Esophagus squamous epithelium (tissue), 5 donors: ENCODE measurements at regions of chr14 and their contacts with region 1.

Region 1: DNA sequence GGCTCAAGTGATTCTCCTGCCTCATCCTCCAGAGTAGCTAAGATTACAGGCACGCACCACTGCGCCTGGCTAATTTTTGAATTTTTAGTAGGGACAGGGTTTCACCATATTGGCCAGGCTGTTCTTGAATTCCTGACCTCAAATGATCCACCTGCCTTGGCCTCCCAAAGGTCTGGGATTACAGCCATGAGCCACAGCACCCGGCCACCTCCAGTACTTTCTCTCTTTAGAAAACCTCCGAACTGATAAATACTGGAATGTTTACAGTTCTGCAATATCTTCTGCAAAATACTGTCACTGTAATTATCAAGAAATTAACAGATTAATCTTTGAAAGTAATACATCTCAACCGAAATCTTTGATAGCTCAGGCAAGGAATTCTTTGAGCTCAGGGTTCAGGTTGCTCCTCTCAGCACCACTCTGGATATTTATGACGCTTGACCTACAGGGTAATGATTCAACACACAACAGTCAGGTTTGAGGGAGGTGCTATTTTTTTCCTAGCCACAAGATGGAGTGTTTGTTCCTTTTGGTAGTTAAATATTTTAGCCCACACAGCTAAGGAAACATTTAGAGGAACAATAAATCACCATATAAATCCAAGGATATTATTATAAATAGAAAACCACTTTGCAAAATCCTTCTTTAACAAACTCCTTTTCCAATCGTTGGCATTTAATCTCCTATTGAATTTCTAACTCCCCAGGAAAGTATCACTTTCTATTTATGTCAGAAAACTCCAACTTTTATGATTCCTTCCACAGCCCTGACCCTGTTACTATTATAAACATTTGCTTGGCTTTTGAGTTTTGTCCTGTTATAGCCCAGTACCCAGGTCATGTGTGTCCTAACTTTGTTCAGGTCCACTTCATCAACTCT is 48.6 kb upstream of the GTF2A1 start:
- DNase-seq: no peak
- H3K4me3 ChIP-seq: no peak overlapping the region
- H3K27ac ChIP-seq: no peak overlapping the region
- H3K4me1 ChIP-seq: peaks cover 0 to 27% (median 0%) of the 10 kb centered on the region in 3 donors
- H3K27me3 ChIP-seq: no peaks in the 10 kb centered on the region
- CTCF ChIP-seq: peak; percentile 66 to 91 (median 82)
- POLR2A ChIP-seq: no peak

Region 2: GRCh38 chr14:81464247-81465002 is 195.1 kb after region 1 on chr14:
- intact Hi-C with region 1: loop called (anchors 5 kb)
- DNase-seq: no peak
- H3K4me3 ChIP-seq: peak overlapping the region in 3 of 4 donors; percentile 40 to 59 (median 44)
- H3K27ac ChIP-seq: peak overlapping the region in 2 of 4 donors; percentile 59 to 68
- H3K4me1 ChIP-seq: peaks cover 0 to 24% (median 0%) of the 10 kb centered on the region in 3 donors
- H3K27me3 ChIP-seq: no peaks in the 10 kb centered on the region
- CTCF ChIP-seq: peak; percentile 89 to 95 (median 90)
- POLR2A ChIP-seq: no peak

Region 3: DNA sequence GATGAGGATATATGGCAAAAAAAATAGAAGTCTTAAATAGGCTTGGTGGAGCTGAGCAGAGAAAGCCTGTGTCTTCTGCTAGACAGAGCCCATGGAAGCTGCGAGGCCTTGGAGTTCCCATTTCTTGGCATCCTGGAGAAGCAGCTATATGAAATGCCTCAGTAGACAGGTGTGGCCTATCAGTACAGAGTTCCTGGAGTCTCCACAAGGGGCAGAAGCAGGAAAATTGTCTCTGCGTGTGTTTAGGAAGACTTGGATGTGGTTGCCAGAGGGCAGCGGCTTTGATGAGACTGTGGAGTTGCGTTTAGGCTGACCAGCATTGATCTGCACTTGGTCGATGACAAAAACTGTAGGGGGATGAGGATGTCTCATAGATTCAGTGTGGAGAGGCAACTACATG is 598.8 kb after region 1 on chr14:
- intact Hi-C with region 1: no loop called
- DNase-seq: no peak
- H3K4me3 ChIP-seq: no peak overlapping the region
- H3K27ac ChIP-seq: no peak overlapping the region
- H3K4me1 ChIP-seq: no peaks in the 10 kb centered on the region
- H3K27me3 ChIP-seq: no peaks in the 10 kb centered on the region
- CTCF ChIP-seq: no peak
- POLR2A ChIP-seq: no peak